Heart left ventricle (tissue), 16 donors: ENCODE measurements at regions of chr4 and their contacts with region 1.

Region 1: DNA sequence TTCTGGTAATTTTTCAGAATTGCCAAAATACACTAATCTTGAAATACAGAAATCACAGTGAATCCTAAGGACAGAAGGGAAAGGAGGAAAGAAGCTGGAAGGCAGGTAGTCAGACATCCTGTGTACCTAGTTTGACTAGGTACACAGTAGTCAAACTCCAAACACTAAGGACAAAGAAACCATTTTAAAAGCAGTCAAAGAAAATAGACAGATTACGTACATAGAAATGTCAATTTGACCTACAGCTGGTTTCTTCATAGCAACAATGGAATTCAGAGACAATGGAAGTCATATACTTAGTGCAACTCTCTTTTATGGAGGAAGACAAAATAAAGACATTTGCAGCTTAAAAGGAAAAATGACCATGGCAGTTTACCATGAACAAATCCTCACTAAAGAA is 79.0 kb downstream of the NEUROG2 start:
- DNase-seq: no peak
- ATAC-seq: no peak
- H3K4me3 ChIP-seq: no peak overlapping the region
- H3K27ac ChIP-seq: no peak overlapping the region
- H3K4me1 ChIP-seq: no peaks in the 10 kb centered on the region
- H3K27me3 ChIP-seq: no peaks in the 10 kb centered on the region
- CTCF ChIP-seq: no peak
- POLR2A ChIP-seq: no peak

Region 2: DNA sequence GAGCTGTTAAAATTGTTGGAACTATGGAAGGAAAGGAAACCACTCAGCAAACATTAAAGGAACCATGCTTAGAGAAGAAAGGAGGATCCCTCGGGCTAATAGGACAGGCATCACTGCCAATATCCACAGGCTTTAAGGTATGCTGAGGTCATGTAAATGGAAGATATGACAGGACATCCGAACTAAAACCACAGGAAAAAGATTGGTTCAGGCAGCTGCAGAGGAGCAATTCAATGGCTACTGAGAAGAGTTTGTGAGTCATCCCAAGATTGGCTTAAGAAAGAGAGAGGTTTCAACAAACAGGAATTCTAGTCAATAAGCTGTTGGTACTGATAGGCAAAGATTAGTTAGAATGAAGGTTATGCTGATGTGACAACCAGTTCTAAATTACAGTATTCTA is 398.1 kb before region 1 on chr4:
- intact Hi-C with region 1: no loop called
- DNase-seq: no peak
- ATAC-seq: no peak
- H3K4me3 ChIP-seq: no peak overlapping the region
- H3K27ac ChIP-seq: no peak overlapping the region
- H3K4me1 ChIP-seq: no peaks in the 10 kb centered on the region
- H3K27me3 ChIP-seq: peaks cover 0 to 7% (median 0%) of the 10 kb centered on the region in 9 donors
- CTCF ChIP-seq: no peak
- POLR2A ChIP-seq: no peak

Region 3: DNA sequence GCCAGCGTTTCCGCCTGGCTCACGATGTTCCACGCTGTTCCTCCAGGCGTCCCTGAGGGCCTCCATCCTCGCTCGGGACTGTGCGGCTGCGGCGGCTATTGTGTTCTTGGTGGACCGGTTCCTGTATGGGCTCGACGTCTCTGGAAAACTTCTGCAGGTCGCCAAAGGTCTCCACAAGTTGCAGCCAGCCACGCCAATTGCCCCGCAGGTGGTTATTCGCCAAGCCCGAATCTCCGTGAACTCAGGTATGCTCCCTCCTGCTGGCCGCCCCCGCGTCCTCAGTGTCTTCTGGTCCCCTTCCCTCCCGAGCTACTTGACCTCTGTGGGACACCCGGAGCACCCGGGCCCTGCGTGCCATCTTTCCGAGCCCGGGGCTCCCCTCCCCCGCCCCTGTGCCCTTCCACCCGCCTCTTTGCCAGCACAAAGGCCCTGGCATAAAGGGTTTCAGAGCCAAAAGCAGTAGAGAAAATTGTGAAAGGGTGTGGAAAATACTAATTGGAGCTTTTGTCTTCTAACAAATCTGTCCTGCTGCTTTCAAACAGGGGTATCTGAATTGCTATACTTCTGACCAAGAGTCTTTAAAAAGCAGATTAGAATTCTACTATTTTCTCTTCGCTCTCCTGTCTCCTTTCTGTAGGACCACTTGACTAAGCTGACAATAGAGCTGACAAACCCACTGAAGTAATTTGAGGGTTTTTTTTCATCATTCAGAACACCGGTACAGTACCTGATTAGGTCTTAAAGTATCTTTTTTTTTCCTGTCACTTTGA is 25.0 kb before region 1 on chr4:
- intact Hi-C with region 1: loop called in 1 of 10 experiments (anchors 2 kb)
- DNase-seq: peak in 2 of 5 donors; percentile 34 to 49
- ATAC-seq: no peak
- H3K4me3 ChIP-seq: no peak overlapping the region
- H3K27ac ChIP-seq: no peak overlapping the region
- H3K4me1 ChIP-seq: no peaks in the 10 kb centered on the region
- H3K27me3 ChIP-seq: no peaks in the 10 kb centered on the region
- CTCF ChIP-seq: no peak
- POLR2A ChIP-seq: no peak

Region 4: DNA sequence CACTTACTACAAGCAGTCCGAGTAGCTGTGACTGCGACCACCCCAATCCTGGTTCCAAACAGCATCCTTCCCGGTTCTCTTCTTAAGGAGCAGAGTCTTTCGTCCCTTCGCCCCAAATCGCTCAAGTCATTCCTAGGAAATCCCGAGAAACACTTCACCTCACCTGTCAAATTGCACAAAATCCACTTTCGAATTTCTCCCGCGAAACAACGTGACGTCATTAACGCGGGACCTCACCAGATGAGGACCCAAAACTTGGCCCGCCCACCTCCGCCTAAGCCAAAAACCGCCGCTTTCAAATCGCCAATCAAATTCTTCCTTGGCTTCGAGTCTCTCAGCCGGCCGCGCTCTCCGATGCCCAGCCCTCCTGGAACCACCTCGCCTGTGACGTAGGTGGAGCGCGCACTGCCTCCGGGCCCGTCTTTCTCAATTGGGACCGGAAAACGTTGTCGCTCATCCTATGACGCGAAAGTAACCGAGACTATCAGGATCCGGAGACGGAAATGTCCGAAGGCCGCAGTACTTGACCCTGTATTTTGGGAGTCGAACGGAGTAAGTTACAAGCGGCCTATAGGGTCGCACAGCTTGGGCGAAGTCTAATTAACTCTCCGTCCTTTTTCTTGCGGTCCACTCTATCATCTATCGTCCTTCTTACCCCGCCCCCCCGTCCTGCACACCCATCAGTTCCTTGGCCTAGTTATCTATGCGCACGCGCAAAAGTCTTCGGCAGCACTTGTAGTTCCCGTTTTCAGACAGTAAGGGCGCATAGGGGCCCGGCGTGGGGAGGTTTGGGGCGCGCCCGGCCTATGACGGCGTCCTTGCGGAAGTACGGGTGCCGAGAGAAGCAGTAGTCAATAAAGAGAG is 200.0 kb after region 1 on chr4 and contains the starts of genes LARP7 and ZGRF1:
- intact Hi-C with region 1: no loop called
- DNase-seq: peak; percentile 99
- ATAC-seq: peak; percentile 97 to 98 (median 98)
- H3K4me3 ChIP-seq: peak within 1 kb of the TSS; percentile 45 to 80 (median 68)
- H3K27ac ChIP-seq: peak within 1 kb of the TSS; percentile 92 to 98 (median 97)
- H3K4me1 ChIP-seq: peaks cover 0 to 39% (median 19%) of the 10 kb centered on the region in 12 donors
- H3K27me3 ChIP-seq: no peaks in the 10 kb centered on the region
- CTCF ChIP-seq: peak; percentile 59 to 99 (median 94)
- POLR2A ChIP-seq: no peak
- total RNA-seq, gene LARP7: 43.0 to 70.0 (median 50.3) TPM
- total RNA-seq, gene ZGRF1: 1.4 to 2.9 (median 1.6) TPM

Region 5: DNA sequence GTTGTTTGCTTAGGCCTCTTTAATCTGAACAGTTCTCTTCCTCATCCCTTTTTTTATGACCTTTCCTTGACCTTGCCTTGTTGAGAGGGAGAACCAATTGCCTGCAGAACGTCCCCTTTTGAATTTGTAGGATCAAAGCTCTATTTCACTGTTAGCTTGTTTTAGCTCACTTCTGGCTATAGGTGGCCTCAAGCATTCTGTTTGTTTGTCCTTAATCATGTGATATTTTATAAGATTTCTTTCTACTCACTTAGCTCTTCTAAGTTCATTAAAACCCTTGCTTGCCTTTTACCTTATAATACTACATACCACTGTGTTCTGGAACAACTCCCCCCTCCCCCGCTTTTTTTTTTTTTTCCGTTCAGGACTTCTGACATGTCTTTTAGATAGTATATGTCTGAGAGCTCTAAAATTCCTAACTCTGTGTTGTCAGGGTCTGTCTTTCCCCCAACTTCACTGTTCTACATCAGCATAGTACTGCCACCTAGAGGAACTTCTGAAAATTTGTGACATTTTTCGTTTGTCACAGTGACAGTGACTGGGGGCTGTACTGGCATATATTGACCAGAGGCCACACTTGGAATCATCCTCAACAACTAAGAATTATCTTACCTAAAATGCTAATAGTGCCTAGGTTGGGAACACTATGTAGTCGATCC is 328.5 kb after region 1 on chr4:
- intact Hi-C with region 1: no loop called
- DNase-seq: no peak
- ATAC-seq: peak; percentile 39 to 56 (median 48)
- H3K4me3 ChIP-seq: no peak overlapping the region
- H3K27ac ChIP-seq: peak overlapping the region in 3 of 12 donors; percentile 31 to 50 (median 33)
- H3K4me1 ChIP-seq: peaks cover 0 to 5% (median 0%) of the 10 kb centered on the region in 12 donors
- H3K27me3 ChIP-seq: no peaks in the 10 kb centered on the region
- CTCF ChIP-seq: peak; percentile 19 to 56 (median 40)
- POLR2A ChIP-seq: no peak